PC-3 (cell line): ENCODE measurements at regions of chr3 and their contacts with region 1.

Region 1: GRCh38 chr3:56855856-56856512 is 54.2 kb upstream of the ARHGEF3 start:
- DNase-seq: peak; percentile 46
- ATAC-seq: peak; percentile 72
- H3K4me3 ChIP-seq: no peak overlapping the region
- H3K27ac ChIP-seq: no peak overlapping the region
- H3K4me1 ChIP-seq: peaks cover 13% of the 10 kb centered on the region
- H3K27me3 ChIP-seq: no peaks in the 10 kb centered on the region
- CTCF ChIP-seq: peak; percentile 94

Region 2: GRCh38 chr3:56702490-56703315 is 153.3 kb before region 1 on chr3:
- CTCF ChIA-PET with region 1: no interaction called
- POLR2A ChIA-PET with region 1: no interaction called
- intact Hi-C with region 1: no loop called
- DNase-seq: peak; percentile 84
- ATAC-seq: peak; percentile 88
- H3K4me3 ChIP-seq: no peak overlapping the region
- H3K27ac ChIP-seq: no peak overlapping the region
- H3K4me1 ChIP-seq: no peaks in the 10 kb centered on the region
- H3K27me3 ChIP-seq: no peaks in the 10 kb centered on the region
- CTCF ChIP-seq: peak; percentile 93

Region 3: DNA sequence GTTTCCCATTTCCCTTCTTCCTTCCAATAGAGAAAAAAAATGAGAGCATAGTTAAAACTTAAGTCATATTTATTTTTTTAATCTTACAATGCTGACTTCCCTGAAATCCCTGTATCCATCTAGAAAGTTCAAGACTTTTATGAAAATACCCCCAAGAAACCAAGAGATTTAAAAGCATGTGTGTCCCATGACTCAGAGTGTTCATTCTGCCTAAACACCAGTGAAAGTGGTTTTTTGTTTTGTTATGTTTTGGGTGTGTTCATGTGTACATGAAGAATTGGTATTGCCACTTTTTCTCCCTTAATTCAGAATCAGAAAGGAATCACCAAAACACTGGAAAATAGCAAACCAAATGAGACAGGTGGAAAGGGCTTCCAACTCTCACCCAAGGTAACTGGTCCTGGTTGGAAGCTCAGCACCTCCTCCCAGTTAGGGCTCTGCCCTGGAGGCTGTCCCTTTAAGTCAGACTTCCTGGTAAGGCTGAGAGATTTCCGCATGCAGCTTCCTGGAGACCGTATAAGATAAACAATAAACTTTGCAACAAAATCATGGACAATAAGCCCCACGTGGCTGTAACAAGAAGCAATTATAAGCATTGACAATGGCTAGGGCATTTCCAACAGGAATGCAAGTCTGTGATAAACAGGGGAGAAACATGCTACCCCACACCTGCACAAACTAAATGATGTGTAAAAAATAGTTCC is 67.7 kb after region 1 on chr3:
- CTCF ChIA-PET with region 1: no interaction called
- POLR2A ChIA-PET with region 1: no interaction called
- intact Hi-C with region 1: loop called (anchors 5 kb)
- DNase-seq: peak; percentile 80
- ATAC-seq: peak; percentile 94
- H3K4me3 ChIP-seq: no peak overlapping the region
- H3K27ac ChIP-seq: peak overlapping the region; percentile 66
- H3K4me1 ChIP-seq: peaks cover 22% of the 10 kb centered on the region
- H3K27me3 ChIP-seq: no peaks in the 10 kb centered on the region
- CTCF ChIP-seq: no peak